GM10248 (cell line): ENCODE measurements at regions of chr6 and their contacts with region 1.

Region 1: GRCh38 chr6:111709615-111710398 is 104.1 kb upstream of the TRAF3IP2 start:
- DNase-seq: peak; percentile 69
- CTCF ChIP-seq: peak; percentile 55

Region 2: DNA sequence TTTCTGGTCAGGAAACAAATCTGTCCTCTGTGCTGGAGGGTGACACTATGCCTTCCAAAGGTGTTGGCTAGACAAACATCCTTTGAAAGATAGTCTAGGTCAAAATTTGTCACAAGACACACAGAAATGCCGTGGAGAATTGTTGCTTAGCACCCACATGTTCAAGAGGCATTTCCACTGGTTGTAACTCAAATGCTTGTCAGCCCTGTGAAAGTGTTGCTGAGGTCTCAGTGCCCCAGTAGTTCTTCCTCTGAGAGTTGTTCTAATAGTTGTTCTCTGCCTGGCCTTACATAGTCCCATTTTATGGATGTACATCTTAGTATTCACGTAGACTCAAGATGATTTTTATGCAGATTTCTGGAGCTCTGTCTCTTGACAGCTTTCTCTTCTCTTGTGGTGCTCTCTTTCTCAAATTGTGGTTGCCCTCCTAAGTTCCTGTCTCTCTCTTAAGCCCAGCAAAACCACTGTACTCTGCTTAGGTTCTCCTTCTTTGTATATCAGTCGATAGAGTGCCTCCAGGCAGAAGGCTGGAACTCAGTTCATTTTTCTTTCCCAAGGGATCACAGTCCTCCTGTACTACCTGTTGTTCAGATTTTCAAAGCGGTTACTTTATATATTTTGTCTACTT is 187.3 kb before region 1 on chr6:
- CTCF ChIA-PET with region 1: no interaction called
- POLR2A ChIA-PET with region 1: no interaction called
- DNase-seq: no peak
- CTCF ChIP-seq: no peak

Region 3: DNA sequence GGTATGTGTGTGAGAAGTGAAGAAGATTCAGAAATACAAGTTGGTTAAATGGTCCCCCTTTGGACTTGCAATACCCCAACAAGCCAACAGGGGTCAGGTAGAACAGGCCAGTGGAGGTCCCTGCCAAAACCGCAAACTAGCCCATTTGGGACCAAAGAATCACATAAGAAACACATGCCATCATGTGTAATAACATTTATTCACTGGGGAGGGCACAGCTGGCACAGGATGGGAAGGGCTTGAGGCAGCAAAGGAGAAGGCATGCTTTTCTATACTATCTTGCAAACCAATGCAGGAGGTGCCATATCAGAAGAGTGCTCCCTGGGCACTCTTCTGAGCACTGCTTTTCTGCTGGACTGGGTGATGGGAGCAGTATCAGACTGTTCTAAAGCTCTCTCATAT is 11.9 kb after region 1 on chr6:
- CTCF ChIA-PET with region 1: interaction called, 14 read pairs
- POLR2A ChIA-PET with region 1: no interaction called
- DNase-seq: peak; percentile 48
- CTCF ChIP-seq: peak; percentile 46

Region 4: GRCh38 chr6:111764238-111765175 is 54.7 kb after region 1 on chr6:
- CTCF ChIA-PET with region 1: interaction called, 12 read pairs
- POLR2A ChIA-PET with region 1: no interaction called
- DNase-seq: peak; percentile 69
- CTCF ChIP-seq: no peak

Region 5: DNA sequence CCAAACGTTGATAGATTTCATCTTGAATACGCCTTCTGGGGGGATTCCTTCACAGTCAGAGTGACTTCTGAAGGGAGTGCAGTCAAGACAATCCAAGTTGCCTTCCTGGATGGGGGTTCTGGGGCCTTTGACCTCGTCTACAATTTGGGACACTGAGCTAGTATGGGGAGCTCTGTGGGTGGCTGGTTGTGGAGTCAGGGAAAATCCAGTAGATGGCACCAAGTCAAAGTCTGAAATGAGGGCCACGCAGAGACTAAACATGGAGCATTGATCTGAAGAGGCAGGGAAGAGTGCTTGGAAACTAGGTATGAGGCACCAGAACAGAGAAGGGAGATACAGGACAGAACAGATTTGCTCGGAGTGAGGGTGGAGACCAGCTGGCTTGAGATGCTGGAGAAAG is 300.5 kb after region 1 on chr6:
- CTCF ChIA-PET with region 1: interaction called, 10 read pairs
- POLR2A ChIA-PET with region 1: no interaction called
- DNase-seq: no peak
- CTCF ChIP-seq: peak; percentile 4

Region 6: DNA sequence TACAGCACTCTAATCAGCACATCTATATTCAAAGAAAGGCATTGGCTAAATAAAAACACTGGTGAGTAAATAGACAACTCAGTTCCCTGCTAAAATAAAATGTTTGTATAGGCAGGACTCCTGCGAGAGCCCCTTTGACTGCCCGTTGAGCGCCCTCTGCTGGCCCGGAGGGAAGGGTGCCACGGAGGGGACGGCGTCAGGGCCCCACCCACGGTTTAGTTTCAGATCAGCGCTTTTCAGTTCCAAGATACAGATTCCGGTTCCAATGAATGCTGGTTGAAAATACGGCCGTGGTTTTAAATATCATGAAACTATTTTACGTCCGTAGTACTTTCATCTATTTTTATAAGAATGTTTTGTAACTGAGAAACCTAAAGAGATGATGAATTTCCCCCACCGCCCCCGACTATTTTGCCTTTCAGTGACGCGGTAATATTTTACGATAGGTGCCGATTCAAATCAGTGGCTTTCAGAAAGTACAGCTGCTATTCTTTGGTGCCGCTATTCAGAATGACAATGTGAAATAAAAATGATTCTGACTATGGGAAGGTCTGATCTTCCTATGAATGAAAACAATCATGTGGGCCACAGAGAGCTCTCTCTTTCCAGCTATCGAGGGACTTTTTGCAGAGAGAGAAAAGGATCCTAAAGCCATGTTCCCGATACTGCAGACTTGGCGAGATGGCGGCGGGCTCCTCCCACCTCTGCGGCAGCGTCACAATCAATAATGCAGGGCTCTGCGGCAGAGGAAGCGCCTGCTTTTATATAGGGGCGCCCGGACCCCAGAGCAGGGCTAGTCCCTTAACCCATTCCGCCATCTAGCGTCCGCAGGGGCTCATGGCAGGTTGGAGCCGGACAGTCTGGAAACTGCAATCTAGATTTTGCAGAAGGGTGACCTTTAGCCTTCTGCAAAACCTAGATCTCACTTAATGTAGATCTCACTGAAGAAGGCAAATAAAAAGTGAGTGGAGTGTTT is 333.5 kb after region 1 on chr6:
- CTCF ChIA-PET with region 1: interaction called, 101 read pairs
- POLR2A ChIA-PET with region 1: no interaction called
- DNase-seq: peak; percentile 87
- CTCF ChIP-seq: peak; percentile 98